ENCODE measurements at regions of chrX and their contacts with region 1.

Region 1: DNA sequence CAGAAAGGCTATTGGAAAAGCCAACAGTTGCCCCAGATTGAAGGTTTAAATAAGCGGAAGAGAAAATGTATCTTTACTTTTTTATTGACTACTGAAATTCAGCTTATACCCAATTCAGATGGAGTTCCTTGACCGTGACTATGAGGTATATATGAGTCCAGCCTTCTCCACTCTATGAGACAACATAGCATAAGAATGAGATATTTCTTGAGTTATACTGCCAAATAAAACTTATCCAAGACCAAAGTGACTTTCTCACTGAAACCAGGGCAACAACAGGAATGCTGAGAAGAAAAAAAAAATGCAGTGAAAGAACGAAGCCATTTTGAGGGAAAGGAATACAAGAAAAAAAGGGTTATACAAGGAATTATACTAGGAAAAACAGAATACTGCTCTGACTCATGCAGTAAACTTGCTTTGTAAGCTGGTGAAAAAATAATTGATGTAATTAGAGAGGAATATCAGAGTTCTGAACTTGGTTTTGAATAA is 16.3 kb upstream of the PDK3 start:
- DNase-seq: no peak
- H3K4me3 ChIP-seq: no peak overlapping the region
- H3K27ac ChIP-seq: peak overlapping the region; percentile 76
- H3K4me1 ChIP-seq: peaks cover 0 to 15% of the 10 kb centered on the region in 2 donors
- H3K27me3 ChIP-seq: no peaks in the 10 kb centered on the region
- CTCF ChIP-seq: no peak

Region 2: GRCh38 chrX:24371391-24371972 is 77.3 kb before region 1 on chrX:
- intact Hi-C with region 1: no loop called
- DNase-seq: peak in 1 of 2 donors; percentile 80
- H3K4me3 ChIP-seq: peak overlapping the region in 1 of 2 donors; percentile 19
- H3K27ac ChIP-seq: no peak overlapping the region
- H3K4me1 ChIP-seq: no peaks in the 10 kb centered on the region
- H3K27me3 ChIP-seq: no peaks in the 10 kb centered on the region
- CTCF ChIP-seq: peak; percentile 48 to 67 (median 62)

Region 3: GRCh38 chrX:24426391-24426790 is 22.4 kb before region 1 on chrX:
- intact Hi-C with region 1: loop called (anchors 2 kb)
- DNase-seq: no peak
- H3K4me3 ChIP-seq: no peak overlapping the region
- H3K27ac ChIP-seq: peak overlapping the region; percentile 71 to 79
- H3K4me1 ChIP-seq: peaks cover 0 to 18% of the 10 kb centered on the region in 2 donors
- H3K27me3 ChIP-seq: no peaks in the 10 kb centered on the region
- CTCF ChIP-seq: no peak

Region 4: GRCh38 chrX:24464836-24465531 is 16.2 kb after region 1 on chrX and contains the start of gene PDK3:
- intact Hi-C with region 1: loop called (anchors 2 kb)
- DNase-seq: peak; percentile 66 to 94
- H3K4me3 ChIP-seq: peak within 1 kb of the TSS; percentile 66 to 91
- H3K27ac ChIP-seq: peak within 1 kb of the TSS; percentile 87 to 90
- H3K4me1 ChIP-seq: peaks cover 0 to 4% of the 10 kb centered on the region in 2 donors
- H3K27me3 ChIP-seq: no peaks in the 10 kb centered on the region
- CTCF ChIP-seq: no peak
- total RNA-seq, gene PDK3: 31.1 TPM